Endothelial cell of umbilical vein (primary cell): ENCODE measurements at regions of chr12 and their contacts with region 1.

Region 1: DNA sequence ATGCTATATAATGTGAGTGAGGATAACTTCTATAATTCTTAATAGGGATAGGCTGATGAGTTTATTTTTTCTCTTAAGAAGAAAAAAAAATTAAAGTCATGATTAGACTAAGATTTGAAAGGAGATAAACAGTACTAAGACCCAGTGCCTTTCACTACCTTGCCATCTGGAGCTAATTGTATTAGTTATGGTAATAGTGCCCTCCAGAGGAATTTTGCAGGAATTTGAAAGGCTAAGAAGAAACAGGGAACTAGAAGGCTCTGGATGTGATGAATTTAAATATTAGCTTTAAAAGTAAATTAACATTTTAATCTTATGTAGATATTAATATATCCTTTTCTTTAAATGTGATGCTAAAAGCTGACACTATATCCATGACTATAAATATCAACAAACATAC is 36.6 kb upstream of the PIK3C2G start:
- DNase-seq: no peak
- H3K4me3 ChIP-seq: no peak overlapping the region
- H3K27ac ChIP-seq: no peak overlapping the region
- H3K4me1 ChIP-seq: no peaks in the 10 kb centered on the region
- H3K27me3 ChIP-seq: no peaks in the 10 kb centered on the region
- CTCF ChIP-seq: peak in 1 of 2 donors; percentile 3
- POLR2A ChIP-seq: no peak

Region 2: GRCh38 chr12:18158774-18159557 is 65.8 kb before region 1 on chr12:
- CTCF ChIA-PET with region 1: no interaction called
- POLR2A ChIA-PET with region 1: no interaction called
- dilution Hi-C with region 1: no loop called
- intact Hi-C with region 1: loop called (anchors 1 kb)
- DNase-seq: peak; percentile 5
- H3K4me3 ChIP-seq: no peak overlapping the region
- H3K27ac ChIP-seq: no peak overlapping the region
- H3K4me1 ChIP-seq: no peaks in the 10 kb centered on the region
- H3K27me3 ChIP-seq: no peaks in the 10 kb centered on the region
- CTCF ChIP-seq: peak; percentile 56 to 63
- POLR2A ChIP-seq: no peak

Region 3: DNA sequence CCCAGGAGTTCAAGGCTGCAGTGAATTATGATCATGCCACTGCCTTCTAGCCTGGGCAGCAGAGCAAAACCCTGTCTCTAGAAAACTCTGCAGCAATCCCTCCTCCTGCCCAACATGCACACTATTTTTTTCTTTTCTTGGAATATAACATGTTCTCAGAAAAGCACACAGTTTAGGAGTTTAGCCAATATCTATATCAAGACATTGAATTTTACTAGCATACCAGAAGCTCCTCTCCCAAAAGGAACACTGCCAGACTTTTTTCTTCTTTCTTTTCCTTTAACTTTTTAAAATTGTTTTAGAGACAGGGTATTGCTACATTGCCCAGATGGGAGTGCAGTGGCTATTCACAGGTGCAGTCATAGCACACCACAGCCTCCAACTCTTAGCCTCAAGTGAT is 1107.5 kb after region 1 on chr12:
- CTCF ChIA-PET with region 1: no interaction called
- POLR2A ChIA-PET with region 1: no interaction called
- dilution Hi-C with region 1: no loop called
- intact Hi-C with region 1: no loop called
- DNase-seq: no peak
- H3K4me3 ChIP-seq: no peak overlapping the region
- H3K27ac ChIP-seq: no peak overlapping the region
- H3K4me1 ChIP-seq: no peaks in the 10 kb centered on the region
- H3K27me3 ChIP-seq: no peaks in the 10 kb centered on the region
- CTCF ChIP-seq: no peak
- POLR2A ChIP-seq: no peak